ENCODE measurements at regions of chr20 and their contacts with region 1.

Region 1: DNA sequence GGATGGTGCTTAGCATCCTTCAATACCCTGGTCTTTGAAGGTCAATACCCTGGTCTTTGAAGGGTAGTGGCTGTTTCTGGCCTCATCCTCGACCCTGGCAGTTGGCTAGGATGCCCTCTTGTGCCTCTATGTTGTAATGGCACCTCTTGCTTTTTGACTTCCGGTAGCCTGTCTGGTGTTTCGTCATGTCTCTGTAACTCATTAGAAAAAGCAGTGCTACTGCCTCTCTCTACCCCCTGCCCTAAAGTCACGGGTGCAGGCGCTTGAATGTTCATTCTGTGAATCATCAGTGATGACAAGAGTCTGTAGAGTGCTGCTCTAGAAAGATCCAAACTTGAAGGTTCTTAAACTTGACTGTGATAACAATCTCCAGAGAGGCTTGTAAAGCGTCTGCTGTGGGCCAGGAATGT is 28.3 kb downstream of the RSPO4 start:
- DNase-seq: peak; percentile 55
- ATAC-seq: peak; percentile 93
- H3K4me3 ChIP-seq: no peak overlapping the region
- H3K27ac ChIP-seq: no peak overlapping the region
- H3K4me1 ChIP-seq: peaks cover 0 to 7% of the 10 kb centered on the region in 2 experiments; a peak in 1 of 4 replicates
- H3K27me3 ChIP-seq: no peaks in the 10 kb centered on the region
- CTCF ChIP-seq: peak; percentile 56 to 73 (median 70); a peak in 5 of 6 replicates
- POLR2A ChIP-seq: no peak
- RAD21 ChIP-seq: peak; percentile 58

Region 2: GRCh38 chr20:924639-925038 is 49.2 kb before region 1 on chr20:
- CTCF ChIA-PET with region 1: no interaction called
- POLR2A ChIA-PET with region 1: no interaction called
- RAD21 ChIA-PET with region 1: no interaction called
- intact Hi-C with region 1: no loop called
- DNase-seq: no peak
- ATAC-seq: no peak
- H3K4me3 ChIP-seq: no peak overlapping the region
- H3K27ac ChIP-seq: no peak overlapping the region
- H3K4me1 ChIP-seq: no peaks in the 10 kb centered on the region
- H3K27me3 ChIP-seq: no peaks in the 10 kb centered on the region
- CTCF ChIP-seq: no peak
- POLR2A ChIP-seq: no peak
- RAD21 ChIP-seq: no peak

Region 3: DNA sequence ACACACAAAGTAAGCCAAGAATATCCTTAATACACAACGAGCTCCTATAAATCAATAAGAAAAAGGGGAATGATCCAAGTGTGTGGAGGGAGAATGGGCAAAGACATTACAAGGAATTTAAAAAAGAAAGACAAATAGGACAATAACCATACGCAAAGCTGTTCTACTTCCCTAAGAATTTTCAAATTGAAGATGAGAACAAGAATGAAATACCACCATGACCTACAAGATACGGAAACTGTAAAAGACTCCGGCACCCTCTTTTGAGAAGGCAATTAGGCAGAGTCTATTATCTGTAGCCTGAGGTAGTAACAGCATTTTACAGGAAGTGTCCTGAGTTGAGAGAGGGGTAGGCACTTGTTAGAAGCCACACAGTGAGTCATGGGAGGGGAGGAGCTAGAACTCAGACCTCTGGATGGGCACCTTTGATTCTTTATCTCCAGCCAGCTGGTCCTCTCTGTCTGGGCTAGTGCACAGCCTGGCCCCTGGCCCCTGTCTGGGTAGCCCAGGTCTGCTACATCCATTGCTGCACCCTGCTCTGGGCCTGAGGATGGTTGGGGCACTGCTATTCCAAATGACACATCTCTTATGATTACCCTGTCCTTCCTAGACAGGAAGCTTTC is 13.1 kb after region 1 on chr20:
- CTCF ChIA-PET with region 1: no interaction called
- POLR2A ChIA-PET with region 1: no interaction called
- RAD21 ChIA-PET with region 1: no interaction called
- intact Hi-C with region 1: no loop called
- DNase-seq: peak; percentile 15
- ATAC-seq: peak; percentile 79
- H3K4me3 ChIP-seq: no peak overlapping the region
- H3K27ac ChIP-seq: no peak overlapping the region
- H3K4me1 ChIP-seq: peaks cover 0 to 9% of the 10 kb centered on the region in 2 experiments; a peak in 3 of 4 replicates
- H3K27me3 ChIP-seq: no peaks in the 10 kb centered on the region
- CTCF ChIP-seq: no peak
- POLR2A ChIP-seq: no peak
- RAD21 ChIP-seq: no peak

Region 4: DNA sequence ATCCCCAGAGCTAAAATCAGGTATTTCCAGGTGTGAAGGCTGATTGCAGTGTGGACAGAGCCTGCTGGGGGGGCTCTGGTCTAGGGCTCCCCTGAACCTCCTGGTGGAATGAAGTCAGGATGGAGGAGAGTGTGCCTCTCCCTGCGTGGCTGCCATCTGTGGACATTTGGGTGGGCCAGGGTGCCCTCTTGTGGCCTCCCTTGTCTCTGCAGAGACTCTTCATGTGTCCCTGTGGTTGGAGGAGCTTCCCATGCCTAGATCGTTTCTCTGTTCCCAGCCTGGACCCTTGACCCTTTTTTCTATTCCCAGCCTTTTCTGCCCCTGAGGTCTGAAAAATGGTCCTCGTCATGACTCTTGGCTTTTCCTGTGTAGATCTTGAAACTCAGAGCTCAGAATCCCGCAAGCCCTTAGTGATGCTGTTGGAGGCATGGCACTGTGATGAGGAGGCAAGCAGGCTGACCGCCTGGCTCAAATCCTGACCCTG is 134.7 kb after region 1 on chr20:
- CTCF ChIA-PET with region 1: interaction called, 3 read pairs
- POLR2A ChIA-PET with region 1: no interaction called
- RAD21 ChIA-PET with region 1: no interaction called
- intact Hi-C with region 1: loop called (anchors 10 kb)
- DNase-seq: peak; percentile 26
- ATAC-seq: peak; percentile 98
- H3K4me3 ChIP-seq: no peak overlapping the region
- H3K27ac ChIP-seq: no peak overlapping the region
- H3K4me1 ChIP-seq: no peaks in the 10 kb centered on the region
- H3K27me3 ChIP-seq: no peaks in the 10 kb centered on the region
- CTCF ChIP-seq: peak; percentile 59 to 92 (median 78)
- POLR2A ChIP-seq: no peak
- RAD21 ChIP-seq: peak; percentile 68

Region 5: DNA sequence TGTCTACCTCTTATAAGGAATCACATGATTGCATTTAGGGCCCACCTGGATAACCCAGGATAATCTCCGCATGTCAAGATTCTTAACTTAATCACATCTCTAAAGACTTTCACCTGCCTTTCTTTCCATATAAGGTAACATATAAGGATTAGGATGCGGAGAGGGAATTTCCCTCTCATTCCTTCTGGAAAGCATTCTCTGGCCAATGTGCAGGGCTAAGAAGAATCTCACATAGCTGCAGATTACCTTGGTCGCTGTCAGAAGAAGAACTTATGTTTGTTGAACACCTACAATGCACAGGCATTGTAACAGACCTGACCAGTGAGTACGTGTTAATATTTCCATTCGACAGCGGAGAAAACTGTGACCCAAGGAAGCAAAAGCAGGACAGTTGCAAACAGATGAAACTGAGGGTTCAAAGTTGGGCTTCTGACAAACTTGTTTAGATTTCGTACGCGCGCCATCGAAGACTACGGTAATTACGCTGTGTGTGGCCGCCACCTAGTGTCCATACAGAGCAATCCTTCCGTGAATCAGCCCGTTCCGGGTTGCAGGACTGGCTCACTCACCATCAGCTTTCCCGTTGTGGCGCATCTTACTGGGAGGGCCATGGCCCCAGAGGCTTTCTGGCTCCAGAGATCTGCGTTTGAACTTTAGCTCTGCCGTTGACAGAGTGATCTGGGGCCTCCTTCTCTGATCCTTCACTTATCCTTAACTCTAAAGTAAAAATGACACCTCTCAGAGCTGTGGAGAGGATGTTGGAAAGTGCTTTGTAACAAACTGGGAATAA is 239.0 kb after region 1 on chr20:
- CTCF ChIA-PET with region 1: no interaction called
- POLR2A ChIA-PET with region 1: no interaction called
- RAD21 ChIA-PET with region 1: no interaction called
- intact Hi-C with region 1: loop called (anchors 10 kb)
- DNase-seq: peak; percentile 66
- ATAC-seq: peak; percentile 99
- H3K4me3 ChIP-seq: peak overlapping the region in 1 of 2 experiments; percentile 28; a peak in 1 of 4 replicates
- H3K27ac ChIP-seq: no peak overlapping the region
- H3K4me1 ChIP-seq: peaks cover 6 to 19% of the 10 kb centered on the region in 2 experiments; a peak in 3 of 4 replicates
- H3K27me3 ChIP-seq: peaks cover 11% of the 10 kb centered on the region
- CTCF ChIP-seq: peak; percentile 71 to 79 (median 77)
- POLR2A ChIP-seq: no peak
- RAD21 ChIP-seq: peak; percentile 81